Activated B cell treated with CpG ODN at 0.5 μM for 24 hours (primary cell): ENCODE measurements at regions of chr12 and their contacts with region 1.

Region 1: DNA sequence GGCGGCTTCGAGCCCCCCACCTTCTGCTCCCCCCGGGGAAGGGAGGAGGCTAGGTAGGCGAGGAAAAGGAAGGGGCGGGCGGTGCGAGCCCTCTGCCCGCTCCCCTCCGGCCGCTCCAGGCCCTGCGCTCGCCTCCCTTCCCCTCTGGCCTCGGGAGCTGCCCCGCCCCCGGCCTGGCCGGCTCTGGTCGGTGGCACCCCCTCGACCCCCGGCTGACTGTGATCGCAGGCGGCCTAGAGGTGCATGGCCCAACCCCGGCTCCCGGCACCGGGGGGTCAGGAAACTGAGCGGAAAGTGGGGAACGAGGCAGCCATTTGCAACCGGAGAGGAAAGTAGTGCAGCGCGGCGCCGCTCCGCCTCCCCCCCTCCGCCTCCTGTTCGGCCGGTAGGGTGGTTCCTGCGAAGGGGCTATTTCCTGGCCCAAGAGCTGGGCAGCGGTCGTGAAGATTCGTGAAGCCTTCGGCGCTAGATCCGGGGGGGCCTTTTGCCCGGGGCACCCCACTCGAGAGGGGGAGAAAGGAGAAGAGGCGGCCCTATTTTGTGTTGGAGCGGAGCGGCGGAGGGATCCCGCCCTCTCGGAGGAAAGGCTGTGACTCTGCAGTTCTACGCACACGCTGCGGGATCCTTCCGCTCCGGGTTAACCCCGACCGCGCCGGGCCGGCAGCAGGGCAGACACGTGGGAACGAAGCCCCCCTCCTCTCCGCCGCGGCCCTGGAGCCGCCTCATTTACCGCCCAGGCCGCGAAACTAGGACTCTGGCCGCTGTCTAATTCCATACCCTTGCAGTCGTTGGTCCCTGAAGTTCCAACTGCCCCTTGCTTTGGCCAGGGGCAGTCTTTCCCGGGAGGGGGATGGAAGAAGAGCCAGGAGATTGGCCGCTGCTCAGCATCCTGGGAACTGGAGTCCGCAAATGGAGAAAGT is at the start of gene KMT2D:
- DNase-seq: peak; percentile 83
- ATAC-seq: peak; percentile 67
- H3K4me3 Mint-ChIP-seq: peak within 1 kb of the TSS; percentile 97
- H3K27ac Mint-ChIP-seq: peak within 1 kb of the TSS; percentile 97
- H3K4me1 Mint-ChIP-seq: peaks cover 50% of the 10 kb centered on the region
- H3K27me3 Mint-ChIP-seq: no peaks in the 10 kb centered on the region
- CTCF ChIP-seq: no peak
- total RNA-seq, gene KMT2D: 127 and 136 TPM in 2 replicates

Region 2: GRCh38 chr12:48472259-48472658 is 588.2 kb before region 1 on chr12 and contains the start of gene ANP32D:
- CTCF ChIA-PET with region 1: no interaction called
- POLR2A ChIA-PET with region 1: no interaction called
- intact Hi-C with region 1: no loop called
- DNase-seq: no peak
- ATAC-seq: no peak
- H3K4me3 Mint-ChIP-seq: no peak within 1 kb of the TSS
- H3K27ac Mint-ChIP-seq: no peak within 1 kb of the TSS
- H3K4me1 Mint-ChIP-seq: no peaks in the 10 kb centered on the region
- H3K27me3 Mint-ChIP-seq: peaks cover 18% of the 10 kb centered on the region
- CTCF ChIP-seq: no peak
- total RNA-seq, gene ANP32D: not detected in 2 replicates

Region 3: GRCh38 chr12:49018261-49019119 is 42.0 kb before region 1 on chr12 and contains the start of gene PRKAG1:
- CTCF ChIA-PET with region 1: interaction called, 5 read pairs
- POLR2A ChIA-PET with region 1: interaction called, 7 read pairs
- intact Hi-C with region 1: loop called (anchors 1 kb)
- DNase-seq: peak; percentile 97
- ATAC-seq: peak; percentile 86
- H3K4me3 Mint-ChIP-seq: peak within 1 kb of the TSS; percentile 93
- H3K27ac Mint-ChIP-seq: peak within 1 kb of the TSS; percentile 98
- H3K4me1 Mint-ChIP-seq: peaks cover 31% of the 10 kb centered on the region
- H3K27me3 Mint-ChIP-seq: no peaks in the 10 kb centered on the region
- CTCF ChIP-seq: no peak
- total RNA-seq, gene PRKAG1: 55.3 and 70.5 TPM in 2 replicates

Region 4: DNA sequence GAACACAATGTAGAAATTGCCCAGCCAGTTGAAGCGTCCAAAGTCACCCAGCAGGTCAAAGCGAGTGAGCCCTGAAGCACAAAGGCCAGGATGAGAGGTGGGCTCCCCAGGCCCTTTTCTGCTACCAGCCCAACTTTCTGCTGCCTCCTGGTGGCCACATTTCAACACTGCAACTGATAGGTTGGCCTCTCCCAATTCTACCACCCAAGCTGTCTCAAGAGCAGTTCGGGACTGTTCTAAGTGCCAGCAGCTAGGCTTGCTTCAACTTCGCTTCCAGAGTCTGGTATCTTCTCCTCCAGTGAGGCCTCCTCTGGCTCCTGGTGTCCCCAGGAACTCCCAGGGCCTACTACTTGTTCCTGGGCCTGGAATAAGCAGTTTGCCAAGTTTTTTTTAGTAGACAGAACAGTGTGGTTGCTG is 37.5 kb after region 1 on chr12:
- CTCF ChIA-PET with region 1: interaction called, 79 read pairs
- POLR2A ChIA-PET with region 1: interaction called, 5 read pairs
- intact Hi-C with region 1: loop called (anchors 1 kb)
- DNase-seq: peak; percentile 48
- ATAC-seq: peak; percentile 71
- H3K4me3 Mint-ChIP-seq: no peak overlapping the region
- H3K27ac Mint-ChIP-seq: no peak overlapping the region
- H3K4me1 Mint-ChIP-seq: peaks cover 17% of the 10 kb centered on the region
- H3K27me3 Mint-ChIP-seq: peaks cover 16% of the 10 kb centered on the region
- CTCF ChIP-seq: no peak

Region 5: DNA sequence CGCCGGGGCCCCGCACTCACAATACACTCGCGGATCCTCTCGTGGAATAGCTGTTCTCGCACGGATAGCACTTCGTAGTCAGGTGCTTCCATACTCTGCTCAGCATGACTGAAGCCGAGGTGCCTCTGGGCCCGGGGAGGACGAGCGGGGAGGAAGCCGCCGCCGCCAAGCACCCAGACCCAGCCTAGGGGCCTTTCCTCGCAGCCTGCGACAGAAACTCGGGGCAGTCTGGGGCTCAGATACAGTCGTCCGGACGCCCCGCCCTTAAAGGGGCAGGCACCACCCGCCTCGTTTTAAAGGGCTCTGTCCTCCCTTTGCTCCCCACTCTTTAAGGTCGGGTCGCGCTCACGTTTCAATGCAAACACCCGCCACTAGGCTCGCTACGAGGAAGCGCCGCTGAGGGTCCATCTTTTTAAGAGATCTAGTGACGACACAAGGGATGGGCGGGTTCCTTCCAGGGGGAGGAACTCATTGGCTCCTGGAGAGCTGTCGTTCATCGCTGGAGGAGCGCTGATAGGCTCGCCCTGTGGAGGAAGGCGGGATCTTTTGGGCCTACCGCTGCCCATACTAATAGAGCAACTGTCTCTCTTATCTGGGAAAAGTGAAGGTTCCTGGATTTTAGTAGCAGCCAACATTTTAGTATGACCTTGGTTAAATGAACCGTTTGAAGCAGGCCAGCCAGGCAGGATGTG is 50.1 kb after region 1 on chr12 and contains the start of gene LMBR1L:
- CTCF ChIA-PET with region 1: interaction called, 9 read pairs
- POLR2A ChIA-PET with region 1: interaction called, 8 read pairs
- intact Hi-C with region 1: loop called (anchors 2 kb)
- DNase-seq: peak; percentile 83
- ATAC-seq: peak; percentile 94
- H3K4me3 Mint-ChIP-seq: peak within 1 kb of the TSS; percentile 98
- H3K27ac Mint-ChIP-seq: peak within 1 kb of the TSS; percentile 96
- H3K4me1 Mint-ChIP-seq: peaks cover 46% of the 10 kb centered on the region
- H3K27me3 Mint-ChIP-seq: no peaks in the 10 kb centered on the region
- CTCF ChIP-seq: no peak
- total RNA-seq, gene LMBR1L: 64.2 and 79.9 TPM in 2 replicates

Region 6: GRCh38 chr12:49232940-49233841 is 172.7 kb after region 1 on chr12:
- CTCF ChIA-PET with region 1: interaction called, 13 read pairs
- POLR2A ChIA-PET with region 1: interaction called, 9 read pairs
- intact Hi-C with region 1: loop called (anchors 1 kb)
- DNase-seq: no peak
- ATAC-seq: no peak
- H3K4me3 Mint-ChIP-seq: peak overlapping the region; percentile 93
- H3K27ac Mint-ChIP-seq: peak overlapping the region; percentile 89
- H3K4me1 Mint-ChIP-seq: peaks cover 15% of the 10 kb centered on the region
- H3K27me3 Mint-ChIP-seq: no peaks in the 10 kb centered on the region
- CTCF ChIP-seq: no peak